WTC11 (cell line): ENCODE measurements at regions of chr20 and their contacts with region 1.

Region 1: GRCh38 chr20:45987108-45987780 is 15.2 kb upstream of the ZNF335 start:
- DNase-seq: peak; percentile 93
- ATAC-seq: peak; percentile 91
- H3K4me3 Mint-ChIP-seq: no peak overlapping the region
- H3K27ac Mint-ChIP-seq: no peak overlapping the region
- H3K4me1 Mint-ChIP-seq: peaks cover 14% of the 10 kb centered on the region
- H3K27me3 Mint-ChIP-seq: peaks cover 6% of the 10 kb centered on the region
- CTCF ChIP-seq: peak; percentile 93

Region 2: DNA sequence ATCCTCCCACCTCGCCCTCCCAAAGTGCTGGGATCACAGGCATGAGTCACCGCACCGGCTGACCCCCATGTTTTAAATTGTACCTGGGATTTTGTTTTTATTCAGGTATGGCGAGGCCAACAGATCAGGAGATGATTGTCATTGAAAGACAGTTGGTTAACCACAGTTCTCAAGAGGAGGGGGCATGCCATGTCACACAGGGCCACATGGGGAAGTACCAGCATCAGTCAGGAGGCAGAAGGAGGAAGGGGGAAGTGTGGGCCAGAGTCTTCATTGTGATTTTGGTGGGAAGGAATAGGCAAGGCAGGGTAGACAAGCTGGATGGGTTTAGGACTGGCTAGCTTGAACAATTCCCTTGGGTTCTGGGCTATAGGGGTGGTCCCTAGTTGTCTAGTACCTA is 11.5 kb after region 1 on chr20:
- CTCF ChIA-PET with region 1: interaction called, 28 read pairs
- POLR2A ChIA-PET with region 1: interaction called, 4 read pairs
- DNase-seq: no peak
- ATAC-seq: no peak
- H3K4me3 Mint-ChIP-seq: no peak overlapping the region
- H3K27ac Mint-ChIP-seq: peak overlapping the region; percentile 68; the same call in 1 of the 2 replicates
- H3K4me1 Mint-ChIP-seq: peaks cover 66% of the 10 kb centered on the region
- H3K27me3 Mint-ChIP-seq: no peaks in the 10 kb centered on the region; the same call in 1 of the 2 replicates
- CTCF ChIP-seq: no peak

Region 3: DNA sequence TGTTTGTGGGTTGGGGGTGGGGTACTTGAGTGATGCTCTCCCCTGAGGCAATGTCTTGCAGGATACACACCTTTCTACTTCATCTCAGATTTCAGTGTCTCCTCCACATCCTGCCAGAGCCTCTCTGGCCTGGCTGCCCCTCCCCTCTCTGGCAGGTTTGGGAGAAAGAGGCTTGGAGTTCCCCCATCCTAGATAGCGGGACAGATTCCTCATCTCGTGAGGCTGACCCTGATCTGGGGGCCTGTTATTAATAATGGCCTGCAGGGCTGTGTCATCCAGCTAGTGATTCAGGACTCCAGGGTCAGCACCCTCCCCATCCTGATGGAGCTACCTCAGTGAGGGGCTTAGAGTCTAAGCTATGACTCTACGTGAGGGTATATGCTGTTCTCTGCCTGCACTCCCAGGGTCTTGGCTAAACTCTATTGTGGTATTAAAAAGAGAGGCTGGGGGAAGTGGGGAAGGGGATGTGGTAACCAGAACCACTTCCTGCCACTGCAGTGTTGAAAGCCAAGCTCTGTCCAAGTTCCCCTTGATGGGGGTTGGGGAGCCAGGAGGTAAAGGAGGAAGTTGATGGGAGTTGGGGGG is 17.7 kb after region 1 on chr20:
- CTCF ChIA-PET with region 1: interaction called, 235 read pairs
- POLR2A ChIA-PET with region 1: no interaction called
- DNase-seq: peak; percentile 43
- ATAC-seq: peak; percentile 72
- H3K4me3 Mint-ChIP-seq: peak overlapping the region; percentile 27
- H3K27ac Mint-ChIP-seq: peak overlapping the region; percentile 89
- H3K4me1 Mint-ChIP-seq: peaks cover 80% of the 10 kb centered on the region
- H3K27me3 Mint-ChIP-seq: peaks cover 4% of the 10 kb centered on the region; the same call in 1 of the 2 replicates
- CTCF ChIP-seq: no peak

Region 4: DNA sequence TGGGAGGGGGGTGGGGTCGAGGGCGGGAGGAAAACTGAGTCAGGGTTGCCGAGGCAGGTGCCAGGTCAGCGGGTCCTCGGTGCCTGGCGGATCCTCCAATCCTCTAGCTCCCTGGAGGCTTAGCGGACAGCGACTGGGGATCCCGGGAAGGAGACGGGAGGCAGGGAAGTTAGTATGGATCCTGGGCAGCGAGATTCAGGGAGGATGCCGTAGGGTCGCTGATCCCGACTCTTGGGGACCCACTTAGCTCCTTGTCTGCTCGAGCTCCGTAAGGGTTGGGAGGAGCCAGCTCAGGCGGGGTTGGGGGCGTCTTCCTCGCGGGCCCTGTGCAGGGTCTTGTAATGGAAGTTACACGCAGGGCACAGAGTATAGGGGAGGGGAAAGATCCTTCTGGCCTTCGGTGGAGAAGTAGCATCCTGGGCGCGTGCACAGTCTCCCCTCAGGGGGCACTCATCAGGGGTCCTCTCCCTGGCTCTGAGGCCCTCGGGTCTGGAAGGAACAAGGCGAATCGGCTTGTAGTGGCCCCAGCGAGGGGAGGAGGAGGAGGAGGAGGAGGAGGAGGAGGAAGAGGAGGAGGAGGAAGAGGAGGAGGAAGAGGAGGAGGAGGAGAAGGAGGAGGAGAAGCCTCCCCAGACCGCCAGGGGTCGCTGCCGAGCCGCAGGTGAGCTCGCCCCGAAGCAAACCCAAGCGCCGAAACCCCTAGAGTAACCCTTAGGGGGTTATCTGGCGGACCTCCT is 35.3 kb after region 1 on chr20:
- CTCF ChIA-PET with region 1: interaction called, 13 read pairs
- POLR2A ChIA-PET with region 1: no interaction called
- DNase-seq: peak; percentile 87
- ATAC-seq: peak; percentile 7; the same call in 1 of the 2 replicates
- H3K4me3 Mint-ChIP-seq: peak overlapping the region; percentile 76
- H3K27ac Mint-ChIP-seq: peak overlapping the region; percentile 28; the same call in 1 of the 2 replicates
- H3K4me1 Mint-ChIP-seq: peaks cover 7% of the 10 kb centered on the region
- H3K27me3 Mint-ChIP-seq: peaks cover 50% of the 10 kb centered on the region
- CTCF ChIP-seq: peak; percentile 79